Activated CD4-positive, alpha-beta memory T cell treated with anti-CD3 and anti-CD28 coated beads for 36 hours (primary cell): ENCODE measurements at regions of chr1 and their contacts with region 1.

Region 1: DNA sequence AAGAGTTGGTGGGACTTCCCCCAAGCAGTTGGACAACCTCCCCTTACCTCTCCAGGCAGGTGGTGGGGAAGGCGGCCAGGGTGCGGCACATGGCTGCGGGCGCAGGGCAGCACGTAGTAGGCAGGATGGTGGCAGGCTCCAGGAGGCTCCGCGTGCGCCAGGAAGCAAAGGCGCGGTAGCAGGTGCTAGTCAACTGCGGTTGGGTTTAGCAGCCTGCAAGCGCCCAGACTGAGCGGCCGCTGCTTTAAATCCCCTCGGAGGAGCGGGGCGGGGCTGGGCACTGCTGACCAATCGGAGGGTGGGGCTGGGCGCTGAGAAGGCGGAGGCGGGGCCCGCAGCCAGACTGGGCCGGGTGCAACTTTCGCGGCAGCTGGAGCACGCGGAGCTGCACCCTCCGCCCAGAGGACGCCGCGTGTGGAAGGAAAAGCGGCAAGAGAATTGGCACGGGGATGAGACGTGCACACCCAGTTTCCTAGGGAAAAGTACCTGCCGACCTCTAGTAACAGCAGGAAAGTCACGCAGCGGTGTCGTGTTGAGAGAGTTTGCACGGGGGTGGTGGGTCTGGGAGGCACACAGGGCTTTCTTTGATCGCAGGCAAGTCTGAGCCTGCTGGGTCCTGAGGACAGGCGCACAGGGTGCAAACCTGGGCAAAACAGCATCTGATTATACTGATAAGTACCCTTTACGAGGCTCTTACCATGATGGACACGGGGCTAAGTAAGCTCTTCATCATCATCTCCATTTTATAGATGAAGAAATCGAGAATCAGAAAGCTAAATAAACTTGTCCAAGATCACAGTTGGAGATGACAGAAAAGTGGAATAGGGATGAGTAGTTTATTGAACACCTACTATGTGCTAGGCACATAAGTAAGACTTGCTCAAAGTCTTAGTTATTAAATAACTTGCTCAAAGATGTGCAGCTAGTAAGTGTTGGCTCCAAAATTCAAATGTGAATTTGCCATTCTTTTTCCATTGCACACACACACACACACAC is at the start of gene RGS16:
- DNase-seq: peak; percentile 96
- H3K4me3 Mint-ChIP-seq: no peak within 1 kb of the TSS
- H3K27ac Mint-ChIP-seq: no peak within 1 kb of the TSS
- H3K4me1 Mint-ChIP-seq: peaks cover 35% of the 10 kb centered on the region
- H3K27me3 Mint-ChIP-seq: no peaks in the 10 kb centered on the region
- total RNA-seq, gene RGS16: 49.8 to 51.9 TPM

Region 2: GRCh38 chr1:182552527-182552926 is 51.9 kb before region 1 on chr1:
- CTCF ChIA-PET with region 1: no interaction called
- POLR2A ChIA-PET with region 1: no interaction called
- intact Hi-C with region 1: no loop called
- DNase-seq: no peak
- H3K4me3 Mint-ChIP-seq: no peak overlapping the region
- H3K27ac Mint-ChIP-seq: no peak overlapping the region
- H3K4me1 Mint-ChIP-seq: no peaks in the 10 kb centered on the region
- H3K27me3 Mint-ChIP-seq: peaks cover 6% of the 10 kb centered on the region

Region 3: DNA sequence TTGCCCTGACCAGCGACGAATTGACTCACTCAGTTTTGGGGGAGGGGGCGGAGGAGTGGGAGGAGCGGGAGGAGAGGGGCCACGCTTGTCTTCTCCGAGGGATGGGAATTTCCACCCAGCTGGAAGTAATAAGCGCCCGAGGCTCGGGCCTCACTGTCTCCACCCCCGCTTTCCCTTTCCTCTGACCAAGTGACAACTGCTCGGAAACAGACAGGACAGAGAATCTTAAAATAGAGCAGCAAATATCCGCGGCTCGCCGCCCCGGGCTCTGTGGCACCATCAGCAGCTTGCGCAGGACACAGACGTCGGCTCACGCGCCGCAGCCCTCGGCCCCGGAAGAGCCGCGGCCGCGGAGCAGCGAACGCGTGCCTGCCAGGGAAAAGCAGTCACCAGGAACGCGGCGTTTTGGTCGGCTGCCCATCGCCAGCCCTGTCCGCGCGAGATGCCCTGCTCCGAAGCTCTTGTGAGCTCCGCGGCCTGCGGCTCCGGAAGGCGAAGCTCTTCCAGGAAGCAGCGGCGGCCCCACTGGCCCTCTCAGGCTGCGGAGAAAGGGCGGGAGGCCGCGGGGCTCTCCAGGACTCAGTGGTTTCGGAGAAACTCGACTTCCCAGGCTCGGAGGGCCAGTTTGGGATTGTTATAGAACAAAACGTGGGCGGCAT is 10.5 kb after region 1 on chr1:
- CTCF ChIA-PET with region 1: interaction called, 20 read pairs
- POLR2A ChIA-PET with region 1: interaction called, 83 read pairs
- intact Hi-C with region 1: loop called (anchors 1 kb)
- DNase-seq: peak; percentile 76
- H3K4me3 Mint-ChIP-seq: peak overlapping the region; percentile 77
- H3K27ac Mint-ChIP-seq: peak overlapping the region; percentile 89
- H3K4me1 Mint-ChIP-seq: peaks cover 55% of the 10 kb centered on the region
- H3K27me3 Mint-ChIP-seq: peaks cover 12% of the 10 kb centered on the region

Region 4: DNA sequence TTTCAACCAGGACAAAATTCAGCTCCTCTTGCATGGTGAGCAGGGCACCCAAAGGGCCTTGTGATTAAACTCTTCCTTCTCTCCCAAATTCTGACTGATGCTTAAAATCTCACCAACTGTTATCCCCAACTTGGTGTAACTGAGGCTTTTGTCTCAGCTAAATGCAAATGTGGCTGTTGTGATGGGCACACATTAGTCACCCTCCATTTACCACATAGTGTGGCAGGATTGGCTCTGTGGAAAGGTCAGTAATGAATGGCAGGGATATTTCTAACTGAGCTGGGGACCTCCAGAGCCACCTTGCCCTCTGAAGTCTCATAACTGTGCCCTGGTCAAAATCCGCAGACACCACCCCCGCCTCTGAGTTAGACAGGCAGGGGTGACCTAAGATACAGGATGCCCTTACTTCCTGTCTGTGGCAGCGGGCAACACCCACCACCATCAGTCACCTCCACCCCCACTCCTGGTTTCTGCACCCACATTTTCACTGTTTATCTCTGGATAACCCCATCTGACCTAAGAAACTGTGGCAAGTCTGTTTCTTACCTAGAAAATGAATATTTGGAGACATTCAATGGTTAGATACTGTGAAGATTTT is 25.1 kb after region 1 on chr1:
- CTCF ChIA-PET with region 1: interaction called, 6 read pairs
- POLR2A ChIA-PET with region 1: interaction called, 7 read pairs
- intact Hi-C with region 1: loop called (anchors 1 kb)
- DNase-seq: peak; percentile 87
- H3K4me3 Mint-ChIP-seq: no peak overlapping the region
- H3K27ac Mint-ChIP-seq: peak overlapping the region; percentile 50
- H3K4me1 Mint-ChIP-seq: peaks cover 64% of the 10 kb centered on the region
- H3K27me3 Mint-ChIP-seq: peaks cover 9% of the 10 kb centered on the region

Region 5: DNA sequence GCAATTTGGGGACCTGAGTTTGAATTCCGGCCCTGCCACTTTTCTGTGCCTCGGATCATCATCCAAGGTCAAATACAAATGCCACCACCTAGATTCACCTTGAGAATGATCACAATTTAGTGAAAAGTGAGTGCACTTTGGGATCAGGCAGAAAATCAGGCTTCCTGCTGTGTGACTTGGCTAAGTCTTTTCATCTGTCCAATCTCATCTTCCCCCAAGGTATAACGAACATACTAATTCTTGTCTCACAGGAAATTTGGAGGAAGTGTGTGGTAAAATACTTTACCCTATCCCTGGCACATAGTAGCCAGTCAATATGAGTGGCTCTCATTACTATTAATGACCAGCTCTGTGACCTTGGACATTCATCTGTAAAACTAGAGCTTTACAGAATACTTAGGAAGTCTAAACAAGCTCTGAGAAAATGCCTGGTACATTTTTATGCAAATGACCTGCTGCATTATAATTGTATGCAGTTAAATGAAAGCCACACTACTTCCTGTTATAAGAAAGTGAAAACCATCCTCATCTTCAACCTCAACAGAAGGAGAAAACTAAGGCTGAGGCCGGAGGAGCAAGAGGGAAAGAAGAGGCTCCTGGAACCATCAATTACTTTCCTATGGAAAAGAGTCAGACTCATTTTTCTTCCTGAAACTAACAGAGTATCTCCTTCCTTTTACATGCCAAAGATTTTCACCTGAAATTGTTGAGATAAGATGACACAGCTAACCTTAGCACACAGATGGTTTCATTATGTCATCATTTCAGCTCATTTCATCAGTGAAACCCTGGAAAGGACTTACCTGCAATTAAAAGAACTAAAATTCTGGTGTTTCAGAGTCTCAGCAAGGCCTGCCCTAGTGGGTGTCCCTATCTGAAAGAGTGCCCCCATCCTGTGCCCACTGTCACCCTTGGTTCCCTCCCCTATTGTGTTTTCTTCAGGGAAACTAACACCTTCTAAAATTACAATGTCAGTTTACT is 112.6 kb after region 1 on chr1:
- CTCF ChIA-PET with region 1: interaction called, 3 read pairs
- POLR2A ChIA-PET with region 1: interaction called, 4 read pairs
- intact Hi-C with region 1: loop called (anchors 2 kb)
- DNase-seq: no peak
- H3K4me3 Mint-ChIP-seq: no peak overlapping the region
- H3K27ac Mint-ChIP-seq: peak overlapping the region; percentile 19
- H3K4me1 Mint-ChIP-seq: peaks cover 39% of the 10 kb centered on the region
- H3K27me3 Mint-ChIP-seq: no peaks in the 10 kb centered on the region

Region 6: GRCh38 chr1:182789138-182790076 is 184.9 kb after region 1 on chr1 and contains the start of gene NPL:
- CTCF ChIA-PET with region 1: interaction called, 1,086 read pairs
- POLR2A ChIA-PET with region 1: interaction called, 3 read pairs
- intact Hi-C with region 1: no loop called
- DNase-seq: peak; percentile 90
- H3K4me3 Mint-ChIP-seq: peak within 1 kb of the TSS; percentile 80
- H3K27ac Mint-ChIP-seq: no peak within 1 kb of the TSS
- H3K4me1 Mint-ChIP-seq: peaks cover 13% of the 10 kb centered on the region
- H3K27me3 Mint-ChIP-seq: no peaks in the 10 kb centered on the region
- total RNA-seq, gene NPL: 3.8 to 7.8 TPM

Region 7: GRCh38 chr1:183493548-183494246 is 889.2 kb after region 1 on chr1:
- CTCF ChIA-PET with region 1: no interaction called
- POLR2A ChIA-PET with region 1: no interaction called
- intact Hi-C with region 1: no loop called
- DNase-seq: no peak
- H3K4me3 Mint-ChIP-seq: no peak overlapping the region
- H3K27ac Mint-ChIP-seq: no peak overlapping the region
- H3K4me1 Mint-ChIP-seq: peaks cover 44% of the 10 kb centered on the region
- H3K27me3 Mint-ChIP-seq: no peaks in the 10 kb centered on the region

Region 8: GRCh38 chr1:183989078-183989577 is 1384.7 kb after region 1 on chr1:
- CTCF ChIA-PET with region 1: no interaction called
- POLR2A ChIA-PET with region 1: no interaction called
- intact Hi-C with region 1: no loop called
- DNase-seq: peak; percentile 79
- H3K4me3 Mint-ChIP-seq: no peak overlapping the region
- H3K27ac Mint-ChIP-seq: no peak overlapping the region
- H3K4me1 Mint-ChIP-seq: peaks cover 19% of the 10 kb centered on the region
- H3K27me3 Mint-ChIP-seq: no peaks in the 10 kb centered on the region